Activated T-helper 1 cell treated with anti-CD3 and anti-CD28 coated beads, Interleukin-12 subunit alpha, Interleukin-12 subunit beta, Interleukin-2, Interleukin-4 antibody, amounts not matched to agents 30 ng/mL and 10 ng/mL and 1 ng/mL, durations not matched to agents 14 hours and 24 hours and 36 hours (primary cell): ENCODE measurements at regions of chr2 and their contacts with region 1.

Region 1: DNA sequence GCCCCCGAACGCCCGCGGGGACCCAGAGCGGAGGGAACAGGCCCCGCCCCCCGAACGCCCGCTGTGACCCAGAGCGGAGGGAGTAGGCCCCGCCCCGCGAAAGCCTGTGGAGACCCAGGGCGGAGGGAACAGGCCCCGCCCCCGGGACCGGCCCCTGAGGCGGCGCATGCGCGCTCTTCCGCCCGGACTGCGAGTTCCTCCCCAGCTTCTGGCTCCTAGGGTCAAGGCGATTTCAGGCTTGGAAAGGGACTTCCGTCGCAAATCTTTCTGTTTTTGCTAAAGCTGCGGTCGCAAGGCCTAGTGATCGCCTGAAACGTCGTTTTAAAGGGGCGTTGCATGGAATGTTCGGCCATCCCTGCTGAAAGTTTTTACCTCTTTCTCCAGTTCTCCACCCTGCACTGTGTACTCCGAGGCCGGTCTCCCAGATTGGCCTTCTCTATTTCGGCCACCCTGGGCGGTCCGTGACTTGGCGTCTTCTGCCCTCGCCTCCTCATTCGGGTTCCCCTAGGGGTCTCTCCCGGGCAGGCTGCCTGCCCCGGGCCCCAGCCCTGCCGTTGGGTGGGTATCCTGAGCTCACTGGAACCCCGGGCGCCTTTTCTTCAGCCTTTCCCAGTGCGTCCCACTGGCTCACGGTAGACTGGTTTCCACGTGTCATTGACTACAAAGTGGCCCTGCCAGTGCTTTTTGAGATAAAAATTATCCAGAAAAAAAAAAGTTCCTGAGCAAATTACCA is 372 bp upstream of the WDSUB1 start:
- DNase-seq: peak; percentile 95
- H3K4me3 Mint-ChIP-seq: peak overlapping the region; percentile 84
- H3K27ac Mint-ChIP-seq: peak overlapping the region; percentile 76
- H3K4me1 Mint-ChIP-seq: peaks cover 28% of the 10 kb centered on the region
- H3K27me3 Mint-ChIP-seq: no peaks in the 10 kb centered on the region

Region 2: DNA sequence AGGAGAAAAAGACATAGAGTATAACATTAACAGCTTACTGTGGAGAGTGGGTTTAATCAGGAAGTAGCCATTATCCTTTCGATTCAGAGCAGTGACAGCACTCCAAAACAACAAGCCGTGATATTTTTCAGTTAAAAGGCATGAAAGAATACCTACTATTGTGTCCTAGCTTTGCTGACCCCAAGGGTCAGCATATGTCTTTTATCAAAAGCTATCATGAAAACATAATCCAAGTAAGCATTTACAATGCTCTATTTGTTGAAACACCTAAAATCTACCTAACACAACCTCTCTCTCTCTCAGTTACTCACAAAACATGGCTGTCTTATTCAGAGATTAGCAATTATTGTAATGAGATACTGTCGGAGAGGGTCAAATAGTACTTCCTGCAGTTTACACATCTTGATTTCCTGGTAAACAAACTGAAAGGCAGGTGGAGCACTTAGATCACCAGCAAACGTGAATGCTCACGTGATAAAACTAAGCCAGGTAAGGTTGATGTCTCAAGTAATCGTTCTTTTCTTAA is 229.4 kb after region 1 on chr2:
- intact Hi-C with region 1: loop called (anchors 10 kb)
- DNase-seq: no peak
- H3K4me3 Mint-ChIP-seq: peak overlapping the region; percentile 73
- H3K27ac Mint-ChIP-seq: peak overlapping the region; percentile 24
- H3K4me1 Mint-ChIP-seq: peaks cover 8% of the 10 kb centered on the region
- H3K27me3 Mint-ChIP-seq: peaks cover 5% of the 10 kb centered on the region

Region 3: DNA sequence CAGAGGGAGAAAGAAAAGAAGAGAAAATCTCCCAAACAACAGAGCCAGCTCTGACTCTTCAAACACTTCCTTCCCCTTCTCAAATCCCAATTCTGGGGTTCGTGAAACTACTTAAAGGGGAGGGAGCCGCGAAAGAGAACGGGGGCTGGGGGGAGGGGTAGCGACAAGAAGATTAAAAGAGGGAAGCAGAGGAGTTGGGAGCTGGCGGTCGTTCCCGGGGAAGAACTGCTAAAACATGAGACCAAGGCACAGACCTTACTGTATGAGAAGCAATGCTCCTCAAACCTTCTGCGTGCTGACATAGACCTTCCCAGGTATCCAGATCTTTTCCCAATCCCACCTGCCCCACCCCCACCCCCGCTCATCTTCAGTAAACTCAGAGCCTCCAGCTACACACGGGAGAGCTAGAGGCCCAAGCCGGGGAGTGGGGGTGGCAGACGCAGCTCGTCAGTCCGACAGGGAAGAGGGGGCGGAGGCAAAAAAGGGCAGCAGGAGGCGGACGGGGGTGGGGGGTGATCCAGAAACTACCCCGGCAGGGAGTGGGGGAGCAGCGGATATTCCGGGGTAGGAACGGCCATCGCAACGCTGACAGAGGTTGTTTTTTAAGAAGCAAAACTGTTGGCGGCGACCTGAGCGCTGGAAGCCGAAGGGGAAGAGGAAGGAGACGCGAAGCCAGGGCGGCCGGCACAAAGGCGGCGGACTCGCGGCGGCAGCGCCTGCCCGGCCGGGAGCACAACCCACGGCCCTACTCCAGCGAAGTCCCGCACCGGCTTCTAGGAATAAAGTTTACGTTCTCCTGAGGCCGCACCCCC is 328.5 kb after region 1 on chr2:
- intact Hi-C with region 1: loop called (anchors 5 kb)
- DNase-seq: peak; percentile 2
- H3K4me3 Mint-ChIP-seq: peak overlapping the region; percentile 83
- H3K27ac Mint-ChIP-seq: peak overlapping the region; percentile 21
- H3K4me1 Mint-ChIP-seq: peaks cover 18% of the 10 kb centered on the region
- H3K27me3 Mint-ChIP-seq: peaks cover 32% of the 10 kb centered on the region

Region 4: DNA sequence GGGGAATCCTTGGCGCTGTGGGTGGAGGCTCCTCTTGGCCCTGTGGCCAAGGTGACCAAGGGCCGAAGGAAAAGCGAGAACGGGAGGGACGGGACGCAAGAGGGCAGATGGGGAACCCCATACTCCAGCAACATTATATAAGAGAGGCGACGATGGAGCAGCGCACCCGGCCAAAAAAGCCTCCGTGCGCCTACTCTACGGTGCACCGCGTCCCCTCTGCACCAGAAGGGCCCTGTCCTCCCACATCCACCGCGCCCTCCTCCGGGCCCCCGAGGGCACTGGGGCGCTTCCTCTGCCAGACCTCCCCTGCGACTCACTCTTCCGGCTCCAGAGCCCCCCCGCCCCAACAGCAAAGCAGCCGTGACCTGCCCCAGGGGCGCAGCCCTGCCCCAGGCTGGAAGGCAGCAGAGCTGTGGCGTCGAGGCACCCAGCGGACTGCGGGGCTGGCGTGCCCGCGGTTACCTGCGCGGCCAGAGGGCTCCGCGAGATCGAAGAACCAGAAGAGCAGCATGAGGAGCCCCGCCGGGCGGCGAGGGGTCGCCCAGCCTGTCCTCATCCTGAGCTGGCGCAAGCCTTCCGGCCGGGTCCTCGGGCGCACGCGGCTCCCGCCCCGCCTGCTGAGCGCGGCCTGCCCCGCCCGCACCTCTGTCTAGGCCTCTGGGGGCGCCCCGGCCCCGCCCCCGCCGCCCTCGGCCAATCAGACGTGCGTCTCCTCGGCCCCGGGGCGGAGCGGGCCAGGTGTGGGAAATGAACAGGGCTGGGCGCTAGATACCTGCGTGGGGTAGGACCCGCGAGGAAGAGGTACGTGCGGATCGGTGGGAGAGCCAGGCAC is 617.5 kb after region 1 on chr2:
- intact Hi-C with region 1: loop called (anchors 10 kb)
- DNase-seq: peak; percentile 69
- H3K4me3 Mint-ChIP-seq: peak within 1 kb of the TSS; percentile 92
- H3K27ac Mint-ChIP-seq: peak within 1 kb of the TSS; percentile 91
- H3K4me1 Mint-ChIP-seq: peaks cover 41% of the 10 kb centered on the region
- H3K27me3 Mint-ChIP-seq: no peaks in the 10 kb centered on the region